ENCODE measurements at regions of chr4 and their contacts with region 1.

Region 1: GRCh38 chr4:107989537-107990386 is at the start of gene HADH:
- DNase-seq: peak; percentile 93
- H3K4me3 Mint-ChIP-seq: peak within 1 kb of the TSS; percentile 95
- H3K27ac Mint-ChIP-seq: peak within 1 kb of the TSS; percentile 91
- H3K4me1 Mint-ChIP-seq: peaks cover 33% of the 10 kb centered on the region
- H3K27me3 Mint-ChIP-seq: no peaks in the 10 kb centered on the region
- total RNA-seq, gene HADH: 41.9 and 42.8 TPM in 2 replicates

Region 2: DNA sequence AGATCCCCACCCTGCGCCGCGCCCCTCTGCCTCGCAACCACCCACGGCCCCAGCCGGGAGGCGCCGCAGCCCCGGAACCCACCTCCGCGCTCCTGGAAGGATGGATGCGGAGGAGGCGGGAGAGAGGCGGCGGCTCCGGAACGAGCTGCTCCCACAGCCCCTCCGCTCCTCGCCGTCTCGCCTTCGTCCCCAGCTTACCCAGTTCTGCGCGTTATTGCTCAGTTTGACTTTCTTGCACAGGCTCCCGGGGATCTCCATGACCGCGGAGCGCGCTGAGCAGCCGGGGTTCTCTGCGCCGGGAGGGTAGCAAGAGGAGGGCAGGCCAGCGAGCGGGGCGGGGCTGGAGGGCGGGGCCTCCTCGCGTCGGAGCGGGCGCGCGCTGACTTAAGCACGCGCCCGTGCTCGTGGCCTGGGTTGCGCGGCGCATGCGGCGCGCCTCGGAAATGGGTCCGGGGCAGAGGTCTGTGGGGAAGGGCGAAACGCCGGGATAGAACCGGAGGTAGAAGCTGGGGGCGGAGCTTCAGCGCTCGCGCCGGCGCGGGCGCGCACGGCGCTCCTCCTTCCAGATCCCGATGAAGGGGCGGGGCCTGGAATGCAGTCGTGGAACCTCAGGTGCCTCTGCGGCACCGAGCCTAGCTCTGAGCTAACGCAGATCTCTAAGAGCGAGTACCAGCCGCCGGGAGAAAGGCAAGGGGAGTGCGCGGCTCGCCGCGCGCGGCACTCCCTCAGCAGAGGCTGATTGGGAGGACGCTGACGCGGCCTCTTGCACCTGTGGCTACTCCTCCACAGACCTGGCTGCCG is 269.6 kb before region 1 on chr4 and contains the start of gene PAPSS1:
- intact Hi-C with region 1: loop called (anchors 1 kb)
- DNase-seq: peak; percentile 92
- H3K4me3 Mint-ChIP-seq: peak within 1 kb of the TSS; percentile 91
- H3K27ac Mint-ChIP-seq: peak within 1 kb of the TSS; percentile 87
- H3K4me1 Mint-ChIP-seq: peaks cover 27% of the 10 kb centered on the region
- H3K27me3 Mint-ChIP-seq: no peaks in the 10 kb centered on the region
- total RNA-seq, gene PAPSS1: 36.9 TPM in 2 replicates

Region 3: GRCh38 chr4:107930821-107931774 is 58.7 kb before region 1 on chr4 and contains the start of gene CYP2U1:
- intact Hi-C with region 1: loop called (anchors 5 kb)
- DNase-seq: peak; percentile 77
- H3K4me3 Mint-ChIP-seq: peak within 1 kb of the TSS; percentile 82
- H3K27ac Mint-ChIP-seq: peak within 1 kb of the TSS; percentile 67
- H3K4me1 Mint-ChIP-seq: peaks cover 19% of the 10 kb centered on the region
- H3K27me3 Mint-ChIP-seq: peaks cover 36% of the 10 kb centered on the region
- total RNA-seq, gene CYP2U1: 0.80 and 1.5 TPM in 2 replicates

Region 4: GRCh38 chr4:108166441-108167315 is 176.9 kb after region 1 on chr4:
- intact Hi-C with region 1: loop called (anchors 2 kb)
- DNase-seq: peak; percentile 66
- H3K4me3 Mint-ChIP-seq: peak overlapping the region; percentile 97
- H3K27ac Mint-ChIP-seq: peak overlapping the region; percentile 94
- H3K4me1 Mint-ChIP-seq: peaks cover 55% of the 10 kb centered on the region
- H3K27me3 Mint-ChIP-seq: peaks cover 22% of the 10 kb centered on the region